ENCODE measurements at regions of chr16 and their contacts with region 1.

Region 1: GRCh38 chr16:50195276-50195675 is 42.2 kb downstream of the TENT4B start:
- DNase-seq: no peak
- H3K4me3 ChIP-seq: no peak overlapping the region
- H3K27ac ChIP-seq: no peak overlapping the region
- H3K4me1 ChIP-seq: peaks cover 5% of the 10 kb centered on the region; the same call in 1 of the 2 replicates
- H3K27me3 ChIP-seq: no peaks in the 10 kb centered on the region
- CTCF ChIP-seq: no peak

Region 2: GRCh38 chr16:50267651-50268050 is 72.4 kb after region 1 on chr16:
- CTCF ChIA-PET with region 1: no interaction called
- POLR2A ChIA-PET with region 1: interaction called, 26 read pairs
- intact Hi-C with region 1: no loop called
- DNase-seq: no peak
- H3K4me3 ChIP-seq: no peak overlapping the region
- H3K27ac ChIP-seq: no peak overlapping the region
- H3K4me1 ChIP-seq: peaks cover 45% of the 10 kb centered on the region
- H3K27me3 ChIP-seq: no peaks in the 10 kb centered on the region
- CTCF ChIP-seq: no peak

Region 3: DNA sequence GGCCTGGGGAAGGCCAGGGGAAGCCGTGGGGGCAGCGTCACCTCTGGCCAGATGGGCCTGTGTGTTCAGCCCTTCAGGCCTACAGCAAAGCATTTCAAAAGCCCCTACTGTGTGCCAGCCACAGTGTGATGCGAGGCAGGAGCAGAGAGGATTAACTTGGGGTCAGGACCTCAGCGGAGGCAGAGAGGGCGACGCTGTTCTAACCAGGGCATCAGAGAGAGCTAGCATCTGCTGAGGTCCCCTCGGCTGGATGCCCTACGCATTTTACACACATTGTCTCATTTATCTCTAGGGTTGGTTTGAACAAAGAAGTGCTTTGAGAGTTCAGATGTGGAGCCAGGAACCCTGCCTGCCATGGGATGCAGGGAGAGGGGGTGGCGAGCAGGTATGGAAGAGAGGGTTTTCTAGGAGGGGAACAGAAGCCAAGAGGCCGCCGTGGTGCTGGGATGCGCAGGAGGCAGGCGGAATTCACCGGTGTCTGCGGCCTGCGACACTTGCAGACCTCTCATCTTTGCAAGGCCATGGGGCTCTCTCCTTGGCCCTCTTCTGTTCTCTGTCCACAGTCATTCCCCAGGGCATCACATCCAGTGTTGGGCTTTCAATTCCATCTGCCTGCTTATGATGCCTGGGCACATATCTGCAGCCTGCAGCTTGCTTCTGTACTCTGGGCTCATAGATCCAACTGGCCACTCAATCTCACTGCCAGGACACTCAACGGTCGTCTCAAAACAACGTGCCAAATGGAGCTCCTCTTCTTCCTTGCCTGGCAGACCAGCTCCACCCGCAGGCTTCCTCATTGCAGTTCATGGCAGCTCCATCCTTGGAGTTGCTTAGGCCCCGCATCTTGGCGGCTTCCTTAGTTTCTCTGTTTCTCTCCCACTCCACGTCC is 344.8 kb after region 1 on chr16:
- CTCF ChIA-PET with region 1: no interaction called
- POLR2A ChIA-PET with region 1: interaction called, 12 read pairs
- intact Hi-C with region 1: no loop called
- DNase-seq: no peak
- H3K4me3 ChIP-seq: no peak overlapping the region
- H3K27ac ChIP-seq: no peak overlapping the region
- H3K4me1 ChIP-seq: peaks cover 20% of the 10 kb centered on the region
- H3K27me3 ChIP-seq: no peaks in the 10 kb centered on the region
- CTCF ChIP-seq: no peak

Region 4: DNA sequence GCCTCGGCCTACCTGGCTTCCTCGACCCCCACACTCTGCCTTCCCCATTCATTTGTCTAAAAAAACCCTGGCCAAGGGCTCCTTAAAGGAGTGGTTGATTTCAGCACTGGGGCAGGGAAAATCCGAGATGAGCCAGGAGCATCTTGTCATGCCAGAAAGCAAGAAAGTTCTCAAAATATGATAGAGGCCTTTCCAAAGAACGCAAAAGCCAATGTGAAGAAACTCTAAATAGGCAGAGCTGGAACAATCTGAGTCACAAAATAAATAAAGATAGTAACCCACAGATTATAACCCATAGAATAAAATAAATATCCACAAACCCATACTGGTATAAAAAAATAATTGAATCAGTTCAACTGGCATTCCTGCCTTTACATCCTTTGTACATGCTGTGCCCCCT is 1148.1 kb after region 1 on chr16:
- CTCF ChIA-PET with region 1: no interaction called
- POLR2A ChIA-PET with region 1: interaction called, 19 read pairs
- intact Hi-C with region 1: no loop called
- DNase-seq: no peak
- H3K4me3 ChIP-seq: no peak overlapping the region
- H3K27ac ChIP-seq: no peak overlapping the region
- H3K4me1 ChIP-seq: no peaks in the 10 kb centered on the region
- H3K27me3 ChIP-seq: peaks cover 25% of the 10 kb centered on the region
- CTCF ChIP-seq: no peak

Measured in PC-9 (cell line).